ENCODE measurements at regions of chr10 and their contacts with region 1.

Region 1: DNA sequence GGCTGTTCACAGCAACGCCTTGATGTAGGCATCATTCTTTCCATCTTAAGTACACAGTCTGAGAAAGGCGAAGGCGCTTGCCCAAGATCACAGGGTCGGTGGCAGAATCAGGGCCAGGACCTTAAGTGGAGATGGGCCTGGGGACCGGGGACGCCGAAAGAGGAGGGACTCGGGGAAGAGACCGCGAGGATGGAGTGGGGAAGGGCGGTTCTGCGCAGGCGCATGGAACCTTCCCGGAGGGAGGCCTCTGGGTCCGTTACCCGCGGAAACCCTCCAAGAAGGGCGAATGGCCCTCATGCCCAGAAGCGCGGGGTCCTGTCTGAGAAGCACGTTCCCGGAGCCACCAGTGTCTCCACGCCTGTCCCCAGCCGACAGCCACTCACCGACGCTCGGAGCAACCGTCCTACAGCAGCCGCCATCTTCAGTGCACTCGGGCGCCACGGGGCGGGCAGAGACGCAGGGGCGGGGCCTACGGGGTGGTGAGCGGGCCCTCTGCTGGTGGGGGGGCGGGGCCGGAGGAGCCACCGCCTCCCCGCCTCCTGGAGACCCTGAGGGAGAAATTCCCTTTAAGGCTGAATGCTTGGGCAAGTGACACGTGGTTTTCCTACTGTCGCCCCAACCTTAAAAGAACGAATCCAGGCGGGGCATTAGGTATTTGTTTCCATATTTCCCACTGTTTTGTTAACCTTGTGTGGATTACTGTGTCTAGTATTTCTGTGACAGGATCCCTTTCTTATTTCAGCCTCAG is at the start of gene PRDX3:
- DNase-seq: peak; percentile 92
- H3K4me3 ChIP-seq: peak within 1 kb of the TSS; percentile 78
- H3K27ac ChIP-seq: peak within 1 kb of the TSS; percentile 62
- H3K4me1 ChIP-seq: peaks cover 35% of the 10 kb centered on the region
- CTCF ChIP-seq: 0 out of 2 replicates have a peak, but pooled peaks have one; percentile 24
- total RNA-seq, gene PRDX3: 124 and 175 TPM in 2 replicates

Region 2: GRCh38 chr10:119028900-119029612 is 149.5 kb before region 1 on chr10:
- CTCF ChIA-PET with region 1: no interaction called
- POLR2A ChIA-PET with region 1: no interaction called
- intact Hi-C with region 1: loop called (anchors 1 kb)
- DNase-seq: peak; percentile 92
- H3K4me3 ChIP-seq: peak overlapping the region; percentile 53
- H3K27ac ChIP-seq: no peak overlapping the region
- H3K4me1 ChIP-seq: peaks cover 37% of the 10 kb centered on the region
- CTCF ChIP-seq: no peak

Region 3: DNA sequence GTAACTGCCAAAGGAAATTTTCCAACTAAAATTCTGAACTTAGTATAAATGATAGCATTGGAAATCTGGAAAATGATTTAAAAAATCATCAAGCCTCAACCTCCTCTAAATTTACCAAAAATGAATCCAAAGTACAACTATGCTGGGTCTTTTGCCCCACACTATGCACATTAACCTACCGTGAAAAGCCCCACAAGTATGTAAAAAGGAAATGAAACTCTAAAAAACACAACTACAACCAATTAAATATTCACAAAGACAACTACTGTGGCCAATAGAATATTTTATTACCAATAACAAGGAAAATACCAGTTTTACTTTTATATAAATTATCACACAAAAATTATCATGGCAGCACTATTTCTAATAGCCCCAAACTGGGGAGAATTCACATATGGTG is 117.2 kb before region 1 on chr10:
- CTCF ChIA-PET with region 1: no interaction called
- POLR2A ChIA-PET with region 1: no interaction called
- intact Hi-C with region 1: no loop called
- DNase-seq: no peak
- H3K4me3 ChIP-seq: no peak overlapping the region
- H3K27ac ChIP-seq: no peak overlapping the region
- H3K4me1 ChIP-seq: peaks cover 9% of the 10 kb centered on the region
- CTCF ChIP-seq: no peak